Activated T-helper 1 cell treated with anti-CD3 and anti-CD28 coated beads, Interleukin-12 subunit alpha, Interleukin-12 subunit beta, Interleukin-2, Interleukin-4 antibody, amounts not matched to agents 30 ng/mL and 10 ng/mL and 1 ng/mL, durations not matched to agents 14 hours and 24 hours and 36 hours (primary cell): ENCODE measurements at regions of chr17 and their contacts with region 1.

Region 1: GRCh38 chr17:78341559-78342448 is 18.1 kb downstream of the SOCS3 start:
- DNase-seq: no peak
- H3K4me3 Mint-ChIP-seq: no peak overlapping the region
- H3K27ac Mint-ChIP-seq: no peak overlapping the region
- H3K4me1 Mint-ChIP-seq: peaks cover 60% of the 10 kb centered on the region
- H3K27me3 Mint-ChIP-seq: peaks cover 4% of the 10 kb centered on the region

Region 2: DNA sequence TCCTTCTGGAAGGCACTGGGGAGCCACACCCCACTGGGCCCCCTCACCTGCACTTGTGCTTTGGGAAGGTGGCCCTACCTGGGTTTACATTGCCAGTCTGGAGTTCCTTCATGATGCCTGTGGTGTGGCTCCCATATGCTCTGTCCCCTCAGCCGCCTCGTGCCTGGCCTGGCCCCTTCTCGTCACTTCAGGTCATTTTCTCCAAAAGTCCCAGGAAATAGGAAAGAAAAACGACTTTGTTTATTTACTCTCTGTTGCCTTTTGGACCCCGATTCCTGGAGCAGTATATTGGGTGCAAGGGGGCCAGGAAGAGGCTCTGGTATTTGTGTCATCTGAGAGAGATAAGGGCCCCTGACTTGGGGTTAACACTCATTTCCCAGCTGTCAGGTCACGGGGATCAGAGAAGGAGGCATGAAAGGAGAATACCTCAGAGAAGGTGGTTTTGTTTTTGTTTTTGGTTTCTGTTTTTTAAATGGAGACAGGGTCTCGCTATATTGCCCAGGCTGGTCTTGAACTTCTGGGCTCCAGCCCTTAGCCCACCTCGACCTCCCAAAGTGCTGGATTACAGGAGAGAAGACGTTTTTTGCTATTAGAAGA is 13.3 kb after region 1 on chr17:
- intact Hi-C with region 1: loop called (anchors 1 kb)
- DNase-seq: peak; percentile 62
- H3K4me3 Mint-ChIP-seq: peak overlapping the region; percentile 94
- H3K27ac Mint-ChIP-seq: peak overlapping the region; percentile 93
- H3K4me1 Mint-ChIP-seq: peaks cover 58% of the 10 kb centered on the region
- H3K27me3 Mint-ChIP-seq: no peaks in the 10 kb centered on the region

Region 3: DNA sequence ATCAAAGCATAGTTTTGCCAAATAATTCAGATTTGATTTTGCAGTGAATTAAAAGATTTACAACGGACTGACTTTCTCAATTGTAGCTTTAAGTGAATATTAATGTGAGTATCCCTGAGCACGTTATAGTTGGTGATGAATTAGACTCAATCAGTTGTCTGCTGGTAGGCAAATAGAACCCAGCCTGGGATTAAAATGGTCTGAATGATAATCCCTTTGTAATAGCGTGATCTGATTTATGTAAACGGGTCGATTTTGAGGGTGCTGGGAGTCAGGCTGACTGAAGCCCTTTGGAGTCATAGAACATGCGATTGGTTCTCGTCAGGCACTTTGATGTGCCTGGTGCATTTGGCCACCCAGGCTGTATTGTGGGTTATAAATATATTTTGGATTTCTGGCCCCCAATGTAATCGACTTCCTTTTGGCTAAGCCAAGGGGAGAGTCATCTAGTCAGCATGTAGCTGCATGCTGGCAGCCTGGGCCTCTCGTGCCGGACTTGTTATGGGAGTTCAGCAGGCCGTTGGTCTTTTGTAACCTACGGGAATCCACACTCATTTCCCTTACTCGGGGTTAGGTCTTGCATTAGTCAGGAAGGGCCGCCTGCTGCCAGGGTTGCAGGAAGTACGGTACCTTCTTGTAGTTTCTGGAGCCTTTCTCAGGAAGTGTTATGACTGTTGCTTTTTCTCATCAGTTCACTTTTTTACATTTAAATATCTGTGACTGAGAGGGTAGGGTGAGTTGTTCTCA is 42.1 kb after region 1 on chr17:
- intact Hi-C with region 1: no loop called
- DNase-seq: peak; percentile 41
- H3K4me3 Mint-ChIP-seq: peak overlapping the region; percentile 82
- H3K27ac Mint-ChIP-seq: peak overlapping the region; percentile 100
- H3K4me1 Mint-ChIP-seq: peaks cover 84% of the 10 kb centered on the region
- H3K27me3 Mint-ChIP-seq: no peaks in the 10 kb centered on the region